GM18951 (cell line): ENCODE measurements at regions of chr4 and their contacts with region 1.

Region 1: GRCh38 chr4:88659055-88659889 is 38.4 kb downstream of the NAP1L5 start:
- POLR2A ChIP-seq: no peak

Region 2: GRCh38 chr4:87633243-87633642 is 1026.0 kb before region 1 on chr4:
- in situ Hi-C with region 1: no loop called
- POLR2A ChIP-seq: no peak

Region 3: GRCh38 chr4:88211473-88212252 is 447.6 kb before region 1 on chr4:
- in situ Hi-C with region 1: loop called (anchors 25 kb)
- POLR2A ChIP-seq: no peak

Region 4: GRCh38 chr4:88523325-88524129 is 135.7 kb before region 1 on chr4 and contains the start of gene PYURF:
- in situ Hi-C with region 1: loop called (anchors 5 kb)
- POLR2A ChIP-seq: peak; percentile 96